AG04450 (cell line): ENCODE measurements at regions of chr20 and their contacts with region 1.

Region 1: GRCh38 chr20:59837623-59838394 is 95.6 kb downstream of the SYCP2 start:
- DNase-seq: no peak
- H3K4me3 ChIP-seq: no peak overlapping the region
- H3K27ac ChIP-seq: no peak overlapping the region
- H3K27me3 ChIP-seq: peaks cover 2% of the 10 kb centered on the region
- CTCF ChIP-seq: no peak

Region 2: GRCh38 chr20:59782986-59783640 is 54.7 kb before region 1 on chr20:
- CTCF ChIA-PET with region 1: interaction called, 10 read pairs
- POLR2A ChIA-PET with region 1: no interaction called
- DNase-seq: no peak
- H3K4me3 ChIP-seq: no peak overlapping the region
- H3K27ac ChIP-seq: no peak overlapping the region
- H3K27me3 ChIP-seq: no peaks in the 10 kb centered on the region
- CTCF ChIP-seq: peak; percentile 76

Region 3: DNA sequence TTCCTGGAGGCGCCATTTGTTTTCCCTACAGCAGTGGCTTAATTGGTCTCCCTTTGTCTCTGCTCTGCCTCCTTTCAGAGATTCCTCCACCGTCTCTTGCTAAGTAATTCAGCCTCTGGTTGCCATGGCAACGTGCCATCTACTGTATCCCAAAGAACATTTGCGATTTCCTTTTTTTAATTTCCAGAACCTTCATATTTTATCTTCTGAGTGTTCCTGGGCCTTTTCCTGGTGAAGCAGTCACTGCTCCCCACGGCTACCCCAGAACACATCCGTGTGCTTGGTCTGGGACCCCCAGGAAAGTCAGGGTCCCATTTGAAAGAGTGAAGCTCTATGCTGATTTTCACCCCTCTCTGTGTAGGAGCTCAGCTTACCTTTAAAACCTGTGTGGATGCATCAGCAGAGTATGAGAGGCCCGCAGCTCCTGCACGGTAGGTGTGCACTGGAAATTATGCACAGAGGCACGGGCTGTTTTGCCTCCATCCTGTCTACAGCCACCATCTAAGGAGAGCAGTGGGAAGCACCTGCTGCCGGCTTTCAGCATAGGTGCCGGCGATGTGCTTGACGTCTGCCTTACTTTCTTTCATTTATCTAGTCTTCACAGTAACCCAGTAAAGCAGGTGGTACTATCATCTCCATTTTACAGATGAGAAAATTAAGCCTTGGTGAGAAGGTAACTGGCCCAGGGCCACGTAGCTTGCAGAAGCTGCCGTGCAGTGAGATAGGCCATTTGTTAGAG is 27.2 kb before region 1 on chr20:
- CTCF ChIA-PET with region 1: no interaction called
- POLR2A ChIA-PET with region 1: no interaction called
- DNase-seq: no peak
- H3K4me3 ChIP-seq: no peak overlapping the region
- H3K27ac ChIP-seq: no peak overlapping the region
- H3K27me3 ChIP-seq: no peaks in the 10 kb centered on the region
- CTCF ChIP-seq: no peak

Region 4: GRCh38 chr20:59850018-59850641 is 12.3 kb after region 1 on chr20:
- CTCF ChIA-PET with region 1: interaction called, 22 read pairs
- POLR2A ChIA-PET with region 1: no interaction called
- DNase-seq: no peak
- H3K4me3 ChIP-seq: no peak overlapping the region
- H3K27ac ChIP-seq: no peak overlapping the region
- H3K27me3 ChIP-seq: no peaks in the 10 kb centered on the region
- CTCF ChIP-seq: peak; percentile 63